ENCODE measurements at regions of chr11 and their contacts with region 1.

Region 1: DNA sequence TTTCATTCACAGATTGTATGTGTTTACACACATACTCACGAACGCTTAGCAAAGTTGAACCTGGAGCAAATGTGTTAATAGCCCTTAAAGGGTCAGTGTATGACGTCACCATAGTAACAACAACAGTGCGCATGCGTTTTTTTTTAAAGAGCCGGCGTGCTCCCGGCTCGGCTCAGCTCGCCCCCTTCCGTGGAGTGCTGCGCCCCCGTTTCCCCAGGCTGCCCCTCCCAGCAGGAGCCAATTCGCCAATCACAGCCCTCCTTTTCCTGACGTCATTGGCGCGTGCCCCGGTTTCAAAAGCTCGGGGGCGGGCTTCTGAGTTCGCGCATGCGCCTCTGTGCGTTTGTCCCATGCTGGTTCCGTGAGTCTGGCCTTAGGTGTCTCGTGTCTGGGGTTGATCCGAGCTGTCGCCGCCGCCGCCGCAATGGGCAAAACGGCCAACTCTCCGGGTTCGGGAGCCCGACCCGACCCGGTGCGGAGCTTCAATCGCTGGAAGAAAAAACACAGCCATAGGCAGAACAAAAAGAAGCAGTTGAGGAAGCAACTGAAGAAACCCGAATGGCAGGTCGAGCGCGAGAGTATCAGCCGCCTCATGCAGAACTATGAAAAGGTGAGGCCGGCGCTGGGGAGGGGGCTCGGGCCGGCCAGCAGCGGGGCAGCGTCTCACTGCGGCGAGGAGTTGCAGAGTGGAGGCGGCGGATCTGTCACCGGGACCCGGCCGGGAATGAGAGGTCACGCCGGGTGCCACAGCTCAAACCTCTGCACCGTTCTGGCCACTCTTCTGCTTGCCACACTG is at the start of gene DDX10:
- DNase-seq: peak; percentile 99
- ATAC-seq: peak; percentile 100
- H3K4me3 ChIP-seq: peak within 1 kb of the TSS; percentile 69 to 94 (median 85)
- H3K4me3 Mint-ChIP-seq: peak within 1 kb of the TSS; percentile 98
- H3K27ac ChIP-seq: peak within 1 kb of the TSS; percentile 52 to 76
- H3K27ac Mint-ChIP-seq: peak within 1 kb of the TSS; percentile 92
- H3K4me1 ChIP-seq: peaks cover 30 to 32% of the 10 kb centered on the region in 2 donors
- H3K4me1 Mint-ChIP-seq: peaks cover 54% of the 10 kb centered on the region
- H3K27me3 ChIP-seq: no peaks in the 10 kb centered on the region
- H3K27me3 Mint-ChIP-seq: peaks cover 5% of the 10 kb centered on the region
- CTCF ChIP-seq: no peak
- total RNA-seq, gene DDX10: 30.6 and 35.8 TPM in 2 replicates

Region 2: DNA sequence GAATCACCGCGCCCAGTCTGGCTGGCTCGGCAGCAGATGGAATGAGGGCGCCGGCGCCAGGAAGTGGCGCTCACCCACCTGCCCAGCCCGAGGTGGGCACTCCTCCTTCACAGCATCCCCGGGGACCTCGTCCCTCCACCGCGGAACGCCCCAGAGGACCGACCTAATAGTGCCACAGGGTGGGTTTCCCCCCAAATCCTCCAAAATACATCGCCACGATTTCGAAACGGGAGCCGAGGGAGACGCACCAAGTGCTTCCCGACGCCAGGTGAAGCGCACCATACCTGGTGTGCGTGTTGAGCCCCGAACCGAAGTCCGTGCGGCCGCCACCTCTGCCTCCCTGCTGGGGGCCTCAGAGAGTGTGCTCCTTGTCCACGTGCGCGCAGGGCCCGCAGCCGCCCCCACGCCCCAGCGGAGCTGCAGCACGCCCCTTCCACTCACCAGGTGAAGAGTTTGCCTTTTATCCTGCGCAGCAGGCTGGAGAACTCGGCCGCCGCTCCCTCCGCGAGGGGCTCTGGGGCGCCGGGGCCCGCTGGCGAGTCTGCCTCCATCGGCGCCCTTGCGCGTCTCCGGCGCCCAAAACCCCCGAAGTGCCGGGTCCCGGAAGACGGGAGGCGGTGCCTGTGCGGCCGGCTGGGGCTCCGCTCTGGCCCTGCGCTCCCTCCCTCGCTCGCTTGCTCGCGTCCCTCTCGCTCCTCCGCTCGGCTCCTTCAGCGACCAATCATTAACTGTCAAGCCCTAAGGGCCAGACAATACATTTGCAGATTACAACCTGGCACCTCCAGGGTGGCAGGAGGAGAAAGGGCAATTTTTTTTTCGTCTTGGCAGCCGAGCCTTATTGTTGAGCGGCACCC is 806.5 kb before region 1 on chr11 and contains the start of gene SLC35F2:
- CTCF ChIA-PET with region 1: no interaction called
- POLR2A ChIA-PET with region 1: no interaction called
- intact Hi-C with region 1: loop called (anchors 2 kb)
- DNase-seq: peak; percentile 88
- ATAC-seq: peak; percentile 93
- H3K4me3 ChIP-seq: peak within 1 kb of the TSS; percentile 63 to 83 (median 78)
- H3K4me3 Mint-ChIP-seq: peak within 1 kb of the TSS; percentile 99
- H3K27ac ChIP-seq: peak within 1 kb of the TSS; percentile 61 to 77
- H3K27ac Mint-ChIP-seq: peak within 1 kb of the TSS; percentile 94
- H3K4me1 ChIP-seq: peaks cover 14 to 26% of the 10 kb centered on the region in 2 donors
- H3K4me1 Mint-ChIP-seq: peaks cover 29% of the 10 kb centered on the region
- H3K27me3 ChIP-seq: no peaks in the 10 kb centered on the region
- H3K27me3 Mint-ChIP-seq: no peaks in the 10 kb centered on the region
- CTCF ChIP-seq: peak; percentile 34
- total RNA-seq, gene SLC35F2: 9.4 and 10.9 TPM in 2 replicates

Region 3: GRCh38 chr11:108237058-108237481 is 427.9 kb before region 1 on chr11:
- CTCF ChIA-PET with region 1: no interaction called
- POLR2A ChIA-PET with region 1: no interaction called
- intact Hi-C with region 1: loop called (anchors 5 kb)
- DNase-seq: peak; percentile 52
- ATAC-seq: peak; percentile 26
- H3K4me3 ChIP-seq: peak overlapping the region in 3 of 5 experiments; percentile 11 to 57 (median 33)
- H3K4me3 Mint-ChIP-seq: peak overlapping the region; percentile 72
- H3K27ac ChIP-seq: peak overlapping the region; percentile 83 to 90
- H3K27ac Mint-ChIP-seq: peak overlapping the region; percentile 86
- H3K4me1 ChIP-seq: peaks cover 27 to 45% of the 10 kb centered on the region in 2 donors
- H3K4me1 Mint-ChIP-seq: peaks cover 43% of the 10 kb centered on the region
- H3K27me3 ChIP-seq: no peaks in the 10 kb centered on the region
- H3K27me3 Mint-ChIP-seq: no peaks in the 10 kb centered on the region
- CTCF ChIP-seq: no peak

Region 4: GRCh38 chr11:108524434-108524833 is 140.5 kb before region 1 on chr11:
- CTCF ChIA-PET with region 1: no interaction called
- POLR2A ChIA-PET with region 1: no interaction called
- intact Hi-C with region 1: no loop called
- DNase-seq: no peak
- ATAC-seq: no peak
- H3K4me3 ChIP-seq: no peak overlapping the region
- H3K4me3 Mint-ChIP-seq: no peak overlapping the region
- H3K27ac ChIP-seq: no peak overlapping the region
- H3K27ac Mint-ChIP-seq: no peak overlapping the region
- H3K4me1 ChIP-seq: no peaks in the 10 kb centered on the region
- H3K4me1 Mint-ChIP-seq: no peaks in the 10 kb centered on the region
- H3K27me3 ChIP-seq: no peaks in the 10 kb centered on the region
- H3K27me3 Mint-ChIP-seq: peaks cover 23% of the 10 kb centered on the region
- CTCF ChIP-seq: no peak

Region 5: DNA sequence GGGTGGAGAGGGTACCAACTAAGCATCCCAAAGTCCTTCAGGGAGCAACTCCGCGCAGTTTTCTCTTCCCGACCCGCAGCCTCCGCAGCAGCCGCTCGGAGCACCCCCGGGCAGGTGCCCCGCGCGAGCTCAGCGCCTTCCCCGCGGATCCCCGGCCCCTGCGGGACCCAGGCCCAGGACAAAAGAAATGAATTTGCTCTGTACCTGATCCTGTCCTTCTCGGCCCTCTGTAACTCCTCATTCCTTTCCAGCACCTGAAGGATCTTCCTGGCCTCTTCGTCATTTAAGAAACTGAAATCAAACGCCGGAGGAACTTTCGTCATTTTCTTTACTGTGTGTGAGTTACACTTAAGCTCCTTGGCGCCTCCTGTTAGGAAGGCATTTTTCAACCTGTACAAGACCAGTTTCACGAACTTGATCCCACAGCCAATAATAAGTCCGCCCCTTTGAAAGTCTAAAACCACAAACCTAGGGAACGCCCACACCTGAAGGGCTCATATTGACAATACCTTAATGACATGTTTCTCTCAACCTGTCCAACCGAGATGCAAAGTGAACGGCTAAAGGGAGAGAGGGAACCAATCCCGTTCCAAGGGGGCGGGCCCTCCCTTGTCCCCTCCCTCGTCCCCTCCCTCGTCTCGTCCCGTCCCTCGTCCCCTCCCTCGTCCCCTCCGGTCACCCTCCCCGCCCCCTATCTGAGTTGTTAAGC is 71.6 kb before region 1 on chr11 and contains the start of gene EXPH5:
- CTCF ChIA-PET with region 1: no interaction called
- POLR2A ChIA-PET with region 1: no interaction called
- intact Hi-C with region 1: loop called (anchors 2 kb)
- DNase-seq: peak; percentile 79
- ATAC-seq: peak; percentile 95
- H3K4me3 ChIP-seq: peak within 1 kb of the TSS; percentile 57 to 81 (median 73)
- H3K4me3 Mint-ChIP-seq: peak within 1 kb of the TSS; percentile 97
- H3K27ac ChIP-seq: no peak within 1 kb of the TSS
- H3K27ac Mint-ChIP-seq: peak within 1 kb of the TSS; percentile 80
- H3K4me1 ChIP-seq: peaks cover 8 to 9% of the 10 kb centered on the region in 2 donors
- H3K4me1 Mint-ChIP-seq: peaks cover 16% of the 10 kb centered on the region
- H3K27me3 ChIP-seq: peaks cover 0 to 29% (median 14%) of the 10 kb centered on the region in 4 experiments
- H3K27me3 Mint-ChIP-seq: peaks cover 46% of the 10 kb centered on the region
- CTCF ChIP-seq: no peak
- total RNA-seq, gene EXPH5: 0.37 and 0.66 TPM in 2 replicates